HepG2 (cell line): ENCODE measurements at regions of chr20 and their contacts with region 1.

Region 1: DNA sequence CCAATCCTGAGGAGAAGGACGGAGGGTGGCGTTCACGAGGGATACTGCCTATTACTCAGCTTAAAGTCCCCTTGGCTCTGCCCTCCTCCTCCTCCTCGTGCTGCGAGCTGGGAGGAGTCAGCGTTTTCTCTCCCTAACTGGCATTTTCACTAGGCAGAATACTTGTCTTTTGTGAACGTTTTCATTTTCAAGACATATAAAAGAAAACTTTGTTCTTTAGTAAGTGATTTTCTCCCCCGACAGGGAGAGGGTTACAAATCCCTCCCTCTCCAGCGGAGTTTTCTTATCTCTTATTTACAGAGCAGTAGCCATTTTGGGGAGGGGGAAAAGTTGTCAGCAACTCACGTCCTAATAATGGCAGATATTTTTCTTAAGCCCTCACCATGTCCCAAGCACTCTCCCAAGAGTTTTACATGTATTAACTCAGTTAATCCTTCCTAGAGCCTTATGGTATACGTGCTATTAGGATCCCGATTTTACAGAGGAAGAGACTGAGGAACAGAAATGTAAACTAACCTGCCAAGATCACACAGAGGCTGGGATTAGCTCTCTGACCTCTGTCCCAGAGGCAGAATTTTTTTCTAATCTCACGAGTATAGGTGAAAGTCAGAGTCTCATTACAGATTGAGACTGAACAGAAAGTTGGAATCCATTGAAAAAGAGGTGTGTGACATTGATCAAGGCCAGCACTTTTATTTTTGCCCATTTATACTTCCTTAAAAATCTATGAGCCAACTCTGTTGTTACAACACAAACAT is 30.0 kb upstream of the ZNF217 start:
- DNase-seq: peak; percentile 77
- ATAC-seq: peak; percentile 88
- H3K4me3 ChIP-seq: peak overlapping the region; percentile 54 to 66 (median 66)
- H3K27ac ChIP-seq: peak overlapping the region; percentile 93
- H3K4me1 ChIP-seq: peaks cover 38% of the 10 kb centered on the region
- H3K27me3 ChIP-seq: no peaks in the 10 kb centered on the region
- CTCF ChIP-seq: peak; percentile 46
- EP300 ChIP-seq: peak in 1 of 2 experiments; percentile 64; a peak in 1 of 4 replicates
- POLR2A ChIP-seq: peak; percentile 78 to 81
- RAD21 ChIP-seq: peak; percentile 22; the same call in 1 of the 2 replicates

Region 2: DNA sequence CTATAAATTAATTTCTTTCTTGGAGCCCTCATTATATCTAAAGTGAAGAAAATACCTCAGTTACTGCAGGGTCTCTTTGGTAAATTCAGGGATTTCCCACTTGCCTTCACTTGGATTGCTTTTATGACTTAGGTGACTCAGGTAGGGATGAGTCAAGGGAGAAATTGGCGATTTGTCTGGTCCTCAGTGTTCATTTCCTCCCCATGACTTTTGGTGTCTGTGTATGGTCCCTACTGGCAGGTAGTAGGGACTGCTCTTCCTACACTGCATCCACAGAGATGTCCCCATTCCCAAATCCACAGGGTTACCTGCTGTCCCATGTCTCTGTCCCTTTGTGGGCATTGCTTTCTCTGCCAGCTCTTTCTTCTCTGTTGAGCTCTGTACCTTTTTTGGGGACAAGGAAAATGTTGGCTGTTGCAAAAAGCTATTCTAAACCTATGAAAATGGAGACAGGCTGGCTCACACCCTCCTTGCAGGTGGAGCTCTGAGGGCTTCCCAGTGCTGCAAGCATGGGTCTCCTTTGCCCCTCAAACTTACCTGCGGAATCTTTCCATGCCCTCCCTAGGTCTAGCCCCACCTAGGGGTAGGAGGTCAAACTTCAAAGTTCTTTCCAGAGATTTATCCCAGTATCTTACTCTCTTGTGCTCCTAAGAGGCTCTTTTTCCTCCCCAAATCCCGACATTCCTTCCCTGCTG is 241.9 kb before region 1 on chr20:
- CTCF ChIA-PET with region 1: no interaction called
- POLR2A ChIA-PET with region 1: no interaction called
- in situ Hi-C with region 1: no loop called
- intact Hi-C with region 1: no loop called
- DNase-seq: no peak
- ATAC-seq: peak; percentile 40
- H3K4me3 ChIP-seq: no peak overlapping the region
- H3K27ac ChIP-seq: no peak overlapping the region
- H3K4me1 ChIP-seq: no peaks in the 10 kb centered on the region
- H3K27me3 ChIP-seq: peaks cover 0 to 25% of the 10 kb centered on the region in 2 experiments; a peak in 2 of 5 replicates
- CTCF ChIP-seq: peak; percentile 21; the same call in 1 of the 2 replicates
- EP300 ChIP-seq: no peak
- POLR2A ChIP-seq: no peak
- RAD21 ChIP-seq: no peak

Region 3: GRCh38 chr20:53609491-53610445 is 13.9 kb before region 1 on chr20:
- CTCF ChIA-PET with region 1: no interaction called
- POLR2A ChIA-PET with region 1: interaction called, 20 read pairs
- in situ Hi-C with region 1: no loop called
- intact Hi-C with region 1: no loop called
- DNase-seq: no peak
- ATAC-seq: no peak
- H3K4me3 ChIP-seq: no peak overlapping the region
- H3K27ac ChIP-seq: no peak overlapping the region
- H3K4me1 ChIP-seq: peaks cover 33% of the 10 kb centered on the region
- H3K27me3 ChIP-seq: no peaks in the 10 kb centered on the region
- CTCF ChIP-seq: no peak
- EP300 ChIP-seq: no peak
- POLR2A ChIP-seq: no peak
- RAD21 ChIP-seq: no peak

Region 4: DNA sequence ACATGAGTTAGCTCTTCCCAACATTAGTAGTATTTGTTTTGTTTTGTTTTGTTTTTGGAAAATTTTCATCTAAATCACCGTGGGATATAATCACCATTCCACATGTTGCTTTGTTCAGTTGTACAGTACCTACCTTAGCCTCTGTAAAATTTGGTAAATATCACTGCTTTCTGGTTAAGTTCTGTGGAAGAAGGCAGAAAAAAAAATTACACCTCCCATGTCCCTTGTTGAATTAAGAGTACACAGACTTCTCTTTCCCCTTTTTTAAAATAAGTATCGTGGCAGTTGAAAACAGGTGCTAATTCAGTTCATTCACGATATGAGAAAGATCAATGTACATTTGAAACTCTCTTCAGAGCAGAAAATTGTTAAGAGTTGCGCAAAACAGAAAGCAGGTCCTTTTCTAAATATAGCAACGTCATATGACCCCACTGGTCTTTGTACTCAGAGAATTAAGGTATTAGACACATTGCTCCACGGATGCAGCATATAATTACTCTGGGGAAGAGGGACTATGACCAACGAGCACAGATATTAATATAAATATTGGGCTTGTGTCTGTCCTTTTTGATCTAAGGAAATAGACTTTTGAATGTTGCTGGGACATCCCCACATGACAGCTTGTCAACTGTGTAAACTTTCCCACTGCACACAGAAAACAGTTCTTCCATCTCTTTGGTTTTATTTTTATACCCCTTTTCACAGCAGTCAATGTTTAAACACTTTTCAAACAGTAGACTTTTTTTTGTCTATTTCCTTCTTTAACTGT is 28.6 kb after region 1 on chr20:
- CTCF ChIA-PET with region 1: no interaction called
- POLR2A ChIA-PET with region 1: interaction called, 26 read pairs
- in situ Hi-C with region 1: no loop called
- intact Hi-C with region 1: no loop called
- DNase-seq: peak; percentile 97
- ATAC-seq: peak; percentile 95
- H3K4me3 ChIP-seq: peak overlapping the region; percentile 8 to 54 (median 39); a peak in 5 of 6 replicates
- H3K27ac ChIP-seq: peak overlapping the region; percentile 93
- H3K4me1 ChIP-seq: peaks cover 71% of the 10 kb centered on the region
- H3K27me3 ChIP-seq: no peaks in the 10 kb centered on the region
- CTCF ChIP-seq: no peak
- EP300 ChIP-seq: peak; percentile 80 to 96; a peak in 3 of 4 replicates
- POLR2A ChIP-seq: peak in 1 of 2 experiments; percentile 40; a peak in 2 of 4 replicates
- RAD21 ChIP-seq: 0 out of 2 replicates have a peak, but pooled peaks have one; percentile 25

Region 5: DNA sequence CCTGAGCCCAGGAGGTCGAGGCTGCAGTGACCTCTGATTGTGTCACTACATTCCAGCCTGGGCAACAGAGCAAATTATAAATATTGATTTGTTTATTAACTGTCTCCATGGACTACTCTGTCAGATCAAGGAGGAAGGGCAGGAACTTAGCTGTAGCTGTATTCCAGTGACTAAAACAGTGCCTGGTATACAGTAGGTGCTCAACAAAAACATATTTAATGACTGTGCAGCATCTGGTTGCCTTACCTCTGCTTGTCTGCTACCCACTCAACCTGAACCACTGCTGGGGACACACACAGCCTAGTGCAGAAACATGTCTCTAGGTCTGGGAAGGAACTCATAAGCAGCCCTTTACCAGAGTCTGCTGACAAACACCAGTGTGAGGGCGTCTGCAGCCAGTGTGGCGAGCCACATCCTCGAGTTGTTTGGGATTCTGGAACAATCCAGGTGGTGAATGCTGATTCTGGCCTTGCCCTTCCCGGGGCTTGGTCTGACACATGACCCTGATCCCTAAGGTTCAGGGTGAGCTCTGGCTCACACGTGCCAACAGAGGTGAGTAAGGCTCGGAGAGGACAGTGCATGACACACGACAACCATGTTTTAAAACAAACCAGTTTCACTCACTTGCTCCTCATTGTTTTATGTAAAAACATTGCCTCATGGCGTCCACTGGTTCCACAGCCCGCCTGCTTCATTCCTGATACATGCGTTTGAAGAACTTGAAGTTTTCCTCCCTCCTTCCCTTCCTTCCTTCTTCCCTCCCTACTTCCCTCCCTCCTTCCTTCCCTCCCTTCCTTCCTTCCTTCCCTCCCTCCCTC is 88.0 kb after region 1 on chr20:
- CTCF ChIA-PET with region 1: no interaction called
- POLR2A ChIA-PET with region 1: interaction called, 12 read pairs
- in situ Hi-C with region 1: no loop called
- intact Hi-C with region 1: no loop called
- DNase-seq: peak; percentile 69
- ATAC-seq: peak; percentile 76
- H3K4me3 ChIP-seq: peak overlapping the region; percentile 35 to 49 (median 42); a peak in 5 of 6 replicates
- H3K27ac ChIP-seq: peak overlapping the region; percentile 30
- H3K4me1 ChIP-seq: peaks cover 58% of the 10 kb centered on the region
- H3K27me3 ChIP-seq: no peaks in the 10 kb centered on the region
- CTCF ChIP-seq: no peak
- EP300 ChIP-seq: peak in 1 of 2 experiments; percentile 66; a peak in 3 of 4 replicates
- POLR2A ChIP-seq: peak in 1 of 2 experiments; percentile 58; a peak in 1 of 4 replicates
- RAD21 ChIP-seq: no peak

Region 6: GRCh38 chr20:53800808-53801604 is 177.4 kb after region 1 on chr20:
- CTCF ChIA-PET with region 1: no interaction called
- POLR2A ChIA-PET with region 1: interaction called, 14 read pairs
- in situ Hi-C with region 1: no loop called
- intact Hi-C with region 1: no loop called
- DNase-seq: peak; percentile 100
- ATAC-seq: peak; percentile 95
- H3K4me3 ChIP-seq: peak overlapping the region; percentile 28 to 48 (median 44); a peak in 4 of 6 replicates
- H3K27ac ChIP-seq: peak overlapping the region; percentile 86
- H3K4me1 ChIP-seq: peaks cover 92% of the 10 kb centered on the region
- H3K27me3 ChIP-seq: no peaks in the 10 kb centered on the region
- CTCF ChIP-seq: 0 out of 2 replicates have a peak, but pooled peaks have one; percentile 20
- EP300 ChIP-seq: peak; percentile 95 to 99; a peak in 3 of 4 replicates
- POLR2A ChIP-seq: 0 out of 4 replicates have a peak, but pooled peaks have one; percentile 23 to 36
- RAD21 ChIP-seq: peak; percentile 56